ENCODE measurements at regions of chr20 and their contacts with region 1.

Region 1: DNA sequence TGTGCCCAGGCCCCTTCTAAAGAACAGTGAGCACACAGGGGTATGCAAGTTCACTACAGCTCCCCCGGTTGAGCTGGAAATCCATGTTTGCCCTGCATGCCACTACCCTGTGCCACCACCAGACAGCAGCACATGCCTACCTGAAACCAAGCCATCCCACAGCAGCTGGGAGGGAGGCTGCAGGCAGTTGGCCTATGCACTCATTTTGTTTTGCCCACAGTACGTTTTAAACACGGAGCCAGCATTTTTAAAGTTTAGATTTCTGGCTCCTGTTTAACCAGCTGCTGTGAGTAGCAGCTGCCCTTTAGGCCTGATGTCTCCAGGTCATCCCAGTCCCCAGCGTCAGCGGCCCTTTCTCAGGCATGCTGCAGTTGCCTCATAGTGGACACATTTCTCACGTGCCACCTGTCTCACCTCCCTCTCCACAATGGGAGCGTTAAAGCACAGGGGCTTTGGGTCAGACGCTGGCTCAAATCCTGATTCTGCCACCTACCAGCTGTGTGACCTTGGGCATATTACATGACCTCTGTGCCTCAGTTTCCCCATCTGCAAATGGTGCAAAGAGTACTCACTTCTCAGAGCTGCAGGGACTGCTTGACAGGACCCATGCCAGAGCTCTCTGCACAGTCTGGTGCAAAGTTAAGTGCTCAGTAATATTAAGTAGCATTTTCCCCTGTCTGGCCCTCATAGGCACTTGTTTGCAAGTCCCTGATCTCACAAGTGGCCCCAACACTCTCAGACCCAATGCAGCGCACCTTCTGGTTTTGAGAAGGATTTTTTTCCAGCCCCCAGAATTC is 8.1 kb upstream of the UBE2V1 start:
- DNase-seq: peak; percentile 69
- ATAC-seq: peak; percentile 78
- H3K4me3 ChIP-seq: no peak overlapping the region
- H3K4me3 Mint-ChIP-seq: no peak overlapping the region
- H3K27ac ChIP-seq: no peak overlapping the region
- H3K27ac Mint-ChIP-seq: no peak overlapping the region
- H3K4me1 ChIP-seq: peaks cover 3 to 4% of the 10 kb centered on the region in 2 donors
- H3K4me1 Mint-ChIP-seq: peaks cover 9% of the 10 kb centered on the region
- H3K27me3 ChIP-seq: no peaks in the 10 kb centered on the region
- H3K27me3 Mint-ChIP-seq: no peaks in the 10 kb centered on the region
- CTCF ChIP-seq: peak; percentile 76

Region 2: GRCh38 chr20:50054626-50055511 is 66.2 kb before region 1 on chr20:
- CTCF ChIA-PET with region 1: no interaction called
- POLR2A ChIA-PET with region 1: no interaction called
- intact Hi-C with region 1: no loop called
- DNase-seq: no peak
- ATAC-seq: no peak
- H3K4me3 ChIP-seq: no peak overlapping the region
- H3K4me3 Mint-ChIP-seq: no peak overlapping the region
- H3K27ac ChIP-seq: no peak overlapping the region
- H3K27ac Mint-ChIP-seq: no peak overlapping the region
- H3K4me1 ChIP-seq: peaks cover under 1 to 7% of the 10 kb centered on the region in 2 donors
- H3K4me1 Mint-ChIP-seq: peaks cover 9% of the 10 kb centered on the region
- H3K27me3 ChIP-seq: no peaks in the 10 kb centered on the region
- H3K27me3 Mint-ChIP-seq: no peaks in the 10 kb centered on the region
- CTCF ChIP-seq: no peak

Region 3: DNA sequence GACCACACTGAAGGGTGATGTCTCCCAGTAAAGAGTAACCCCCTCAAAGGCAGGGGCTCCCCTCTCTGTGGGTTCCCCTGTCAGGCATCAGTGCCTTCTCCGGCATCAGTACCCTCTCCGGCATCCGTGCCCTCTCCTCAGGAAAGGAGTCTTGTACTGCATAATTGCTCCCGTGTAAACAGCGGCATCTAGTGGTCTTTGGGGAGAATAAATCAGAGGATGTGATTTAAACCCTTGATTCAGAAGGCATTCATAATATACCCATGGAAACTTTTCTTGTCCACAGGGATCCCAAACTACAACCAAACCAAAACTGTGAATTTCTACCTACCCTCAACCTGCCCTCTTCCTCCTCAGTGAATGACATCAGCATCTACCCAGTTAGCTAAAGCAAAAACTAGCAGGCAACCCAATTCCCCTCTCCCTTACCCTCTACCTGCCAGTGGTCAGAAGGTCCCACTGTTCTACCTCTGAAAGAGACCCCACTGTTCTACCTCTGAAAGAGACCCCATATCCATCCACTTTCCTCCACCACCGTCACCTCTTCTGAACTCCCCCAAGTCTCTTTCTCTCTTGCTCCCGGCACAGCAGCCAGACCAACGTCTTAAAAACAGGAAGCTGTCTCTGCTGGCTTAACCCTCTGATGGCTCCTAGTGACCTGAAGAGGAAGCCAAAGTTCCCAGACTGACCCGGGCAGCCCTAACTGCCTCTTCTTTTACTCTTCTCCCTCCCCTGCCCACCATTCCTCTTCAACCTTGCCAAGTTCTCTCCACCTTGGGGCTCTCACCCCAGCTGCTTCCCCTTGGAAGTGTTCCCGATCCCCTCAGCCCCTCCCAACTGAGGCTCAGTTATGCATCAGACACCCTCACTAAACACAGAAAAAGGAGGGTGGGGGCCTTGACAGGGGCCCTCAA is 35.4 kb before region 1 on chr20:
- CTCF ChIA-PET with region 1: interaction called, 15 read pairs
- POLR2A ChIA-PET with region 1: no interaction called
- intact Hi-C with region 1: no loop called
- DNase-seq: peak; percentile 71
- ATAC-seq: peak; percentile 86
- H3K4me3 ChIP-seq: peak overlapping the region; percentile 30 to 78 (median 61)
- H3K4me3 Mint-ChIP-seq: peak overlapping the region; percentile 88
- H3K27ac ChIP-seq: peak overlapping the region in 1 of 2 donors; percentile 65
- H3K27ac Mint-ChIP-seq: peak overlapping the region; percentile 64
- H3K4me1 ChIP-seq: peaks cover 12 to 13% of the 10 kb centered on the region in 2 donors
- H3K4me1 Mint-ChIP-seq: peaks cover 13% of the 10 kb centered on the region
- H3K27me3 ChIP-seq: no peaks in the 10 kb centered on the region
- H3K27me3 Mint-ChIP-seq: no peaks in the 10 kb centered on the region
- CTCF ChIP-seq: peak; percentile 87

Region 4: GRCh38 chr20:50110141-50110925 is 10.8 kb before region 1 on chr20:
- CTCF ChIA-PET with region 1: interaction called, 10 read pairs
- POLR2A ChIA-PET with region 1: no interaction called
- intact Hi-C with region 1: no loop called
- DNase-seq: peak; percentile 61
- ATAC-seq: peak; percentile 10
- H3K4me3 ChIP-seq: peak overlapping the region in 2 of 5 experiments; percentile 3 to 41
- H3K4me3 Mint-ChIP-seq: peak overlapping the region; percentile 88
- H3K27ac ChIP-seq: peak overlapping the region; percentile 79 to 91
- H3K27ac Mint-ChIP-seq: peak overlapping the region; percentile 90
- H3K4me1 ChIP-seq: peaks cover 63 to 67% of the 10 kb centered on the region in 2 donors
- H3K4me1 Mint-ChIP-seq: peaks cover 81% of the 10 kb centered on the region
- H3K27me3 ChIP-seq: no peaks in the 10 kb centered on the region
- H3K27me3 Mint-ChIP-seq: no peaks in the 10 kb centered on the region
- CTCF ChIP-seq: no peak

Region 5: DNA sequence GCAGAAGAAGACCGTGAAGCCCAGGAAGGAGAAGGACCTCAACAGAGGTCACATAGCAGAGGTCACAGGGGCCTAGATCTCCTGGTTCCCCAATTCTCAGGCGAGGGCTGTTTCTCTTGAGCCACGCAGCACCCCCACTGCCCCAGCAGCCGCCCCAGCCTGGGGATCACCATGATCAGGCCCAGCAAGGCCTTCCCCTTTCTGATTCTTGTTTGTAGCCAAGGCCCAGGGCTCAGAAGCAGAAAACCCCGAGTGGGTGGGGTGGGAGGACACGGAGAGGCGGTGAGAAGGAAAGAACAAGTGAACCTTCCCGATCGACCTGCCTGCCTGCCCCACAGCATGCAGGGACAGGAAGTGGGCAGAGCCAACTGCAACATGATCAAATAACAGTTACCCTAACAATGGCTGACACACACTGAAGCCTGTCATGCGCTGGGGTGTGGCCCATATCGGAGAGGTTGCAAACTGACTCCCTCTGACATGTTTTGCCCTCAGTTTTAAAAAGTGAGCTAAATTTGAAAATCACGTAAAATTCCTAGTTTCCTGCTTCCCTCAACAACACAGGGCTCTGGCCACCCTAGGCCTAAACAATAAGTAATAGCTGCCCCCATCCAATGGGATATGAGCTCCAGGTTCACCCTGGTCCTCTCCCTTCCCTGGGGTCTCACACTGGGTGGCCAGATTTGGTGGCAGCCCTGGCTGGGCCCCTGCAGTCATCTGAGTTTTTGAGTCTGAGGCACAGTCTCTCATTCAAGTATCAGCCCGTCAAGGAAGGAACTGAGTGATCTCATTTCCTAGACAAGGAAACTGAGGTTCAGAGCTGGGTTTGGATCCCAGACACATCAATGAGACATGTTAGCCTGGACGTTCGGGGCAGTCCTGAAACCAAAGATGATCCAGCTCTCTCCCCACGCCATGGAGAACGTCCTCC is 25.9 kb after region 1 on chr20:
- CTCF ChIA-PET with region 1: interaction called, 39 read pairs
- POLR2A ChIA-PET with region 1: interaction called, 10 read pairs
- intact Hi-C with region 1: no loop called
- DNase-seq: peak; percentile 91
- ATAC-seq: peak; percentile 94
- H3K4me3 ChIP-seq: peak overlapping the region in 4 of 5 experiments; percentile 1 to 35 (median 18)
- H3K4me3 Mint-ChIP-seq: peak overlapping the region; percentile 74
- H3K27ac ChIP-seq: peak overlapping the region; percentile 90 to 95
- H3K27ac Mint-ChIP-seq: peak overlapping the region; percentile 97
- H3K4me1 ChIP-seq: peaks cover 25 to 27% of the 10 kb centered on the region in 2 donors
- H3K4me1 Mint-ChIP-seq: peaks cover 49% of the 10 kb centered on the region
- H3K27me3 ChIP-seq: no peaks in the 10 kb centered on the region
- H3K27me3 Mint-ChIP-seq: no peaks in the 10 kb centered on the region
- CTCF ChIP-seq: no peak

Region 6: GRCh38 chr20:50153485-50154377 is 32.6 kb after region 1 on chr20 and contains the start of gene PEDS1:
- CTCF ChIA-PET with region 1: interaction called, 39 read pairs
- POLR2A ChIA-PET with region 1: interaction called, 10 read pairs
- intact Hi-C with region 1: no loop called
- DNase-seq: peak; percentile 89
- ATAC-seq: peak; percentile 98
- H3K4me3 ChIP-seq: peak within 1 kb of the TSS; percentile 71 to 96 (median 87)
- H3K4me3 Mint-ChIP-seq: peak within 1 kb of the TSS; percentile 77
- H3K27ac ChIP-seq: peak within 1 kb of the TSS; percentile 63 to 85
- H3K27ac Mint-ChIP-seq: peak within 1 kb of the TSS; percentile 86
- H3K4me1 ChIP-seq: peaks cover 18 to 24% of the 10 kb centered on the region in 2 donors
- H3K4me1 Mint-ChIP-seq: peaks cover 38% of the 10 kb centered on the region
- H3K27me3 ChIP-seq: no peaks in the 10 kb centered on the region
- H3K27me3 Mint-ChIP-seq: no peaks in the 10 kb centered on the region
- CTCF ChIP-seq: no peak
- total RNA-seq, gene PEDS1: 11.2 and 13.9 TPM in 2 replicates

Region 7: GRCh38 chr20:50165684-50166554 is 44.8 kb after region 1 on chr20:
- CTCF ChIA-PET with region 1: interaction called, 297 read pairs
- POLR2A ChIA-PET with region 1: no interaction called
- intact Hi-C with region 1: loop called (anchors 1 kb)
- DNase-seq: peak; percentile 74
- ATAC-seq: peak; percentile 97
- H3K4me3 ChIP-seq: peak overlapping the region in 4 of 5 experiments; percentile 24 to 56 (median 47)
- H3K4me3 Mint-ChIP-seq: peak overlapping the region; percentile 84
- H3K27ac ChIP-seq: no peak overlapping the region
- H3K27ac Mint-ChIP-seq: peak overlapping the region; percentile 70
- H3K4me1 ChIP-seq: peaks cover 9 to 10% of the 10 kb centered on the region in 2 donors
- H3K4me1 Mint-ChIP-seq: peaks cover 10% of the 10 kb centered on the region
- H3K27me3 ChIP-seq: peaks cover 0 to 6% (median 2%) of the 10 kb centered on the region in 4 experiments
- H3K27me3 Mint-ChIP-seq: peaks cover 12% of the 10 kb centered on the region
- CTCF ChIP-seq: no peak

Region 8: DNA sequence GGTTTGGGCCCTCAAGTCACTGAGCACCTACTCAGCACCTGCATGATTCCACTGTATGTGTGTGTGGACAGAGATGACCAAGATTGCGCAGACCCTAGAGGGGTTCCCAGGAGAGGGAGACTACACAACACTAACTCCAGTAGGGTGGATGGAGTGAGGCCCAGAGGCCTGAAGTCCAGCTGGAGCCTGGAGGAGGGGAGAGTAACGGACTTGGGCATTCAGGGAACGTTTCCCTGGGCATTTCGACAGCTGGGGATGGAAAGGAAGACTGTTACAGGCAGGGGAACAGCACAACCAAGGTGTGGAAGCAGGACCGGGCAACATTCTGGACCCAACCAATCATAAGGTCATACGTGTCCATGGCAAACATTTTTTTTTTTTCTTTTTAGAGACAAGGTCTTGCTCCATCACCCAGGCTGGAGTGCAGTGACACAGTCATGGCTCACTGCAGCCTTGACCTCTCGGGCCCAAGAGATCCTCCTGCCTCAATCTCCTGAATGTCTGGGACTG is 58.5 kb after region 1 on chr20:
- CTCF ChIA-PET with region 1: interaction called, 297 read pairs
- POLR2A ChIA-PET with region 1: no interaction called
- intact Hi-C with region 1: loop called (anchors 2 kb)
- DNase-seq: no peak
- ATAC-seq: peak; percentile 25
- H3K4me3 ChIP-seq: no peak overlapping the region
- H3K4me3 Mint-ChIP-seq: no peak overlapping the region
- H3K27ac ChIP-seq: no peak overlapping the region
- H3K27ac Mint-ChIP-seq: no peak overlapping the region
- H3K4me1 ChIP-seq: no peaks in the 10 kb centered on the region
- H3K4me1 Mint-ChIP-seq: no peaks in the 10 kb centered on the region
- H3K27me3 ChIP-seq: peaks cover 0 to under 1% (median 0%) of the 10 kb centered on the region in 4 experiments
- H3K27me3 Mint-ChIP-seq: peaks cover 9% of the 10 kb centered on the region
- CTCF ChIP-seq: peak; percentile 55

Region 9: GRCh38 chr20:50224531-50225255 is 103.6 kb after region 1 on chr20:
- CTCF ChIA-PET with region 1: no interaction called
- POLR2A ChIA-PET with region 1: no interaction called
- intact Hi-C with region 1: no loop called
- DNase-seq: no peak
- ATAC-seq: no peak
- H3K4me3 ChIP-seq: no peak overlapping the region
- H3K4me3 Mint-ChIP-seq: no peak overlapping the region
- H3K27ac ChIP-seq: no peak overlapping the region
- H3K27ac Mint-ChIP-seq: no peak overlapping the region
- H3K4me1 ChIP-seq: no peaks in the 10 kb centered on the region
- H3K4me1 Mint-ChIP-seq: no peaks in the 10 kb centered on the region
- H3K27me3 ChIP-seq: no peaks in the 10 kb centered on the region
- H3K27me3 Mint-ChIP-seq: peaks cover 17% of the 10 kb centered on the region
- CTCF ChIP-seq: no peak